HCT116 (cell line): ENCODE measurements at regions of chr19 and their contacts with region 1.

Region 1: GRCh38 chr19:55605207-55605636 is 225 bp upstream of the ZNF865 start:
- DNase-seq: peak; percentile 92
- ATAC-seq: peak; percentile 81
- H3K4me3 ChIP-seq: peak overlapping the region; percentile 89 to 93
- H3K27ac ChIP-seq: peak overlapping the region; percentile 98
- H3K4me1 ChIP-seq: peaks cover 26 to 46% of the 10 kb centered on the region in 2 experiments
- H3K27me3 ChIP-seq: no peaks in the 10 kb centered on the region
- CTCF ChIP-seq: no peak
- POLR2A ChIP-seq: no peak
- RAD21 ChIP-seq: no peak

Region 2: DNA sequence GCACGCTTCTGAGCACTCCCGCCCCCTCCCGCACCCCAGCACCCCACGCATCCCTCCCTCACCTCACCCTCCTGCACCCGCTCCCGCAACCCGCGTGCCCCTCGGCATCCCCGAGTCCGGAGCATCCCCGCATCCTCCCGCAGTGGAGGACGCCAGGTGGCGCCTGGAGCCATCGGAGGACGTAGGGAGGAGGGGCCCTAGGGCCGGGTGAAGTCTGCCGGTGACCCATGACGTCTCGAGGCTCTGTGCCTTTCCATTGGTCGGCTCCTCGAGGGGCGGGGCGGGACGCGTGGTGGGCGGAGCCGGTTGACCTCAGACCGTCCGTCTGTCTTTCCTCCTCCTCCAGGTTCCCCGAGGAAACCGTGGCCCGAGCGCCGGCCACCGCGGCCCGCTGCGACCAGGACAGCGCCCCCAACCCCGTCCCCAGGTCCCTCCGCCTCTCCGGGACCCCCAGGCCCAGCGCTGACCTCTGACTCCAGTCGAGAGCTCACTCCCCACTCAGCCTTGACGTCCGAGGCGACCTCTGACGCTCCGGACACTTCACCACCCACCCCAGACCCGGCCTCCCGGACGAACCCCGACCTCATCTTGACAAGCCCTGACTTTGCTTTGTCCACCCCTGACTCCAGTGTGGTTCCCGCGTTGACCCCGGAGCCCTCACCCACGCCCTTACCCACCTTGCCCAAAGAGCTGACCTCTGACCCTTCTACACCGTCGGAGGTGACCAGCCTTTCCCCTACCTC is 88.2 kb before region 1 on chr19:
- CTCF ChIA-PET with region 1: interaction called, 8 read pairs
- POLR2A ChIA-PET with region 1: no interaction called
- RAD21 ChIA-PET with region 1: interaction called in 1 of 2 experiments, 4 read pairs
- intact Hi-C with region 1: loop called (anchors 1 kb)
- DNase-seq: peak; percentile 87
- ATAC-seq: peak; percentile 99
- H3K4me3 ChIP-seq: peak overlapping the region; percentile 44 to 57
- H3K27ac ChIP-seq: peak overlapping the region; percentile 50; the same call in 1 of the 2 replicates
- H3K4me1 ChIP-seq: peaks cover 4 to 8% of the 10 kb centered on the region in 2 experiments; a peak in 3 of 4 replicates
- H3K27me3 ChIP-seq: no peaks in the 10 kb centered on the region
- CTCF ChIP-seq: peak; percentile 79 to 96 (median 90)
- POLR2A ChIP-seq: no peak
- RAD21 ChIP-seq: peak; percentile 100

Region 3: GRCh38 chr19:55836340-55836739 is 231.1 kb after region 1 on chr19 and contains the start of gene NLRP4:
- CTCF ChIA-PET with region 1: no interaction called
- POLR2A ChIA-PET with region 1: no interaction called
- RAD21 ChIA-PET with region 1: no interaction called
- intact Hi-C with region 1: no loop called
- DNase-seq: no peak
- ATAC-seq: peak; percentile 63; the same call in 1 of the 2 replicates
- H3K4me3 ChIP-seq: no peak within 1 kb of the TSS
- H3K27ac ChIP-seq: no peak within 1 kb of the TSS
- H3K4me1 ChIP-seq: no peaks in the 10 kb centered on the region
- H3K27me3 ChIP-seq: no peaks in the 10 kb centered on the region
- CTCF ChIP-seq: no peak
- POLR2A ChIP-seq: no peak
- RAD21 ChIP-seq: no peak
- total RNA-seq, gene NLRP4: 0.52 TPM